ENCODE measurements at regions of chr12 and their contacts with region 1.

Region 1: GRCh38 chr12:95473884-95474659 is at the start of gene METAP2:
- DNase-seq: peak; percentile 97
- ATAC-seq: peak; percentile 100
- H3K4me3 Mint-ChIP-seq: peak within 1 kb of the TSS; percentile 100
- H3K27ac Mint-ChIP-seq: peak within 1 kb of the TSS; percentile 100
- H3K4me1 Mint-ChIP-seq: peaks cover 17% of the 10 kb centered on the region
- H3K27me3 Mint-ChIP-seq: peaks cover 2% of the 10 kb centered on the region; the same call in 1 of the 2 replicates
- CTCF ChIP-seq: no peak
- total RNA-seq, gene METAP2: 107 to 112 TPM (median 108 TPM) in 3 replicates

Region 2: GRCh38 chr12:95217377-95218149 is 256.5 kb before region 1 on chr12 and contains the starts of genes FGD6 and VEZT:
- CTCF ChIA-PET with region 1: no interaction called
- POLR2A ChIA-PET with region 1: interaction called, 12 read pairs
- DNase-seq: peak; percentile 99
- ATAC-seq: peak; percentile 92
- H3K4me3 Mint-ChIP-seq: peak within 1 kb of the TSS; percentile 97
- H3K27ac Mint-ChIP-seq: peak within 1 kb of the TSS; percentile 100
- H3K4me1 Mint-ChIP-seq: peaks cover 51% of the 10 kb centered on the region
- H3K27me3 Mint-ChIP-seq: no peaks in the 10 kb centered on the region
- CTCF ChIP-seq: no peak
- total RNA-seq, gene FGD6: 24.2 to 28.2 TPM (median 24.4 TPM) in 3 replicates
- total RNA-seq, gene VEZT: 51.5 to 54.5 TPM (median 53.9 TPM) in 3 replicates

Region 3: GRCh38 chr12:95446506-95446900 is 27.6 kb before region 1 on chr12:
- CTCF ChIA-PET with region 1: interaction called, 3 read pairs
- POLR2A ChIA-PET with region 1: interaction called, 13 read pairs
- DNase-seq: peak; percentile 76
- ATAC-seq: peak; percentile 88
- H3K4me3 Mint-ChIP-seq: peak overlapping the region; percentile 75
- H3K27ac Mint-ChIP-seq: peak overlapping the region; percentile 38; the same call in 1 of the 2 replicates
- H3K4me1 Mint-ChIP-seq: peaks cover 24% of the 10 kb centered on the region
- H3K27me3 Mint-ChIP-seq: peaks cover 13% of the 10 kb centered on the region
- CTCF ChIP-seq: no peak

Measured in WTC11 (cell line).